ENCODE measurements at regions of chr9 and their contacts with region 1.

Region 1: DNA sequence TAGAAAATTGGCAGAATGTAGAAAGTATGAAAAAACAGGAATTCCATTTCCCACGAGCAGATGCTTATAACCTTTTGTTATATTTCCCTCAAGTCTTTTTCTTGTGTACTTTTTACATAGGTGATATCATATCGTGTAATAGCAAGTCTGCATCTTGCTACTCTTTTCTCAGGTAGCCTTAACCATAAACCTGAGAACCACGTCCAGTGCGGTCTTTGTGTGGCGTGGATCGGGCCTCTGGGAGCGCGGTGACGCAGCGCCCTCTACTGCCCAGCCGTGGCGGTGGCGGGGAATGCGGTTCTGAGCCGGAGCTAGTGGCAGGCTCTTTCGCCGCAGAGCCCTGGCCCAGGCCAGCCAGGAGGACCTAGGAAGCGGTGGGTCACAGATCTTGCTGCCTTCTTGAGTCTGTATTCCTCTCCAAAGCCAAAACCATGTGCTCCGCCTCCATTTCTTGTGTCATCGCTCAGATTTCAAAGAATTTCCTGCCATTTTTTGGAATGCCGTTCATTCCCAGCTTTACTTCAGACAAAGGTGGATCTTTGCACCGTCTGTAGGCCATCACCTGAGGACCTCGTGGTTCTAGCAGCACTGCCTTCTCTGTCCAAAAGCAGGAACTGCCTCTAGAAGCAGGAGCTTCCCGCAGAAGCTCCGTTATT is 71.9 kb downstream of the MVB12B start:
- DNase-seq: peak; percentile 51 to 80
- ATAC-seq: peak; percentile 88 to 96; a peak in 5 of 6 replicates
- H3K4me3 ChIP-seq: no peak overlapping the region
- H3K27ac ChIP-seq: no peak overlapping the region
- H3K4me1 ChIP-seq: peaks cover 10% of the 10 kb centered on the region
- CTCF ChIP-seq: peak; percentile 93
- EP300 ChIP-seq: no peak
- POLR2A ChIP-seq: no peak
- RAD21 ChIP-seq: peak; percentile 93 to 96

Region 2: GRCh38 chr9:126070058-126070655 is 328.4 kb before region 1 on chr9:
- CTCF ChIA-PET with region 1: no interaction called
- POLR2A ChIA-PET with region 1: no interaction called
- DNase-seq: no peak
- ATAC-seq: no peak
- H3K4me3 ChIP-seq: no peak overlapping the region
- H3K27ac ChIP-seq: no peak overlapping the region
- H3K4me1 ChIP-seq: no peaks in the 10 kb centered on the region
- CTCF ChIP-seq: no peak
- EP300 ChIP-seq: no peak
- POLR2A ChIP-seq: no peak
- RAD21 ChIP-seq: no peak

Region 3: DNA sequence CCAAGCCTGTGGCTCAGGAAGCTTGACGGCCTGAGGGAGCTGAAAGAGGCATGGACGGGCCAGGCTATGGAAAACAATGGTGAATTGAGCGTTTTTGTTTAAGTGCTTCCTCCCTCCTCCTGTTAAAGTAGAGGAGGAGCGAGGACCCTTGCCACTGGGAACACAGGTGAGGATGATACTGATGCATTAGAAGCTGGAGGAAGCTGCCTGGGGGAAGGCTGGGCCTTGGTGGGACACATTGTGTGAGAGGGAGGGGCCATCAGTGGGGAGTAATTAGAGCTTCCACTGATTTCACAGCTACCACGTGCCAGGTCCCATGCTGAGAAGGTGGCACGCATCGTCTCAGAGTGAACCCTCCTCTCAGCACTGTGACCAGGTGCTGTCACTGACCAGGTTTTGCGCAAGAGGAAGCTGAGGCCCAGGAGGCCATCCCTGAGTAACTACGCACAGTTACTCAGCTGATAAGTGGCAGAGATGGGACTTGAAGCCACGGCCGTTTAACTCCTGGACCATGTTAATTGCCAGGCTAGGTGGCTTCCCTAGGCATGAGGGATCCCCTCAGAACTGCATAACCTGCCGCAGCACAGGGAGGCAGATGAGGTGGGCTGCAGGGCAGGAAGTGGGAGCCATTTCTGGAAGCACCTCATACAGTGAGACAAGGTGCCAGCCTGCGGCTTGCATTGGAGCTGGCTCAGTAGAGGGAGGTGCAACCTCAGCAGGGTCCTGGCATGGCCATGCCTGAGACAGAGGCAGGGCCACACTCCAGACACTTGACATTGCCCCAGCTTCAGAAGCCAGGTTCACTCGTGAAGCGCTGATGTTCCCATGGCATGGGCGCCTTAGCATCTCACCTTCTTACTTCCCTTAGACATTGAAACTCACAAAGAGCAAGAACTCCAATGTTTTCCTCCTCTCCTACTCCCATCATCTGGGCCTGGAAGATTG is 267.2 kb before region 1 on chr9:
- CTCF ChIA-PET with region 1: no interaction called
- POLR2A ChIA-PET with region 1: no interaction called
- DNase-seq: no peak
- ATAC-seq: no peak
- H3K4me3 ChIP-seq: no peak overlapping the region
- H3K27ac ChIP-seq: no peak overlapping the region
- H3K4me1 ChIP-seq: no peaks in the 10 kb centered on the region
- CTCF ChIP-seq: no peak
- EP300 ChIP-seq: no peak
- POLR2A ChIP-seq: no peak
- RAD21 ChIP-seq: no peak

Region 4: GRCh38 chr9:126301985-126302603 is 96.4 kb before region 1 on chr9:
- CTCF ChIA-PET with region 1: interaction called, 198 read pairs
- POLR2A ChIA-PET with region 1: no interaction called
- DNase-seq: peak; percentile 64 to 75
- ATAC-seq: peak; percentile 91 to 95
- H3K4me3 ChIP-seq: no peak overlapping the region
- H3K27ac ChIP-seq: no peak overlapping the region
- H3K4me1 ChIP-seq: no peaks in the 10 kb centered on the region
- CTCF ChIP-seq: peak; percentile 69
- EP300 ChIP-seq: no peak
- POLR2A ChIP-seq: no peak
- RAD21 ChIP-seq: peak; percentile 64 to 74

Region 5: DNA sequence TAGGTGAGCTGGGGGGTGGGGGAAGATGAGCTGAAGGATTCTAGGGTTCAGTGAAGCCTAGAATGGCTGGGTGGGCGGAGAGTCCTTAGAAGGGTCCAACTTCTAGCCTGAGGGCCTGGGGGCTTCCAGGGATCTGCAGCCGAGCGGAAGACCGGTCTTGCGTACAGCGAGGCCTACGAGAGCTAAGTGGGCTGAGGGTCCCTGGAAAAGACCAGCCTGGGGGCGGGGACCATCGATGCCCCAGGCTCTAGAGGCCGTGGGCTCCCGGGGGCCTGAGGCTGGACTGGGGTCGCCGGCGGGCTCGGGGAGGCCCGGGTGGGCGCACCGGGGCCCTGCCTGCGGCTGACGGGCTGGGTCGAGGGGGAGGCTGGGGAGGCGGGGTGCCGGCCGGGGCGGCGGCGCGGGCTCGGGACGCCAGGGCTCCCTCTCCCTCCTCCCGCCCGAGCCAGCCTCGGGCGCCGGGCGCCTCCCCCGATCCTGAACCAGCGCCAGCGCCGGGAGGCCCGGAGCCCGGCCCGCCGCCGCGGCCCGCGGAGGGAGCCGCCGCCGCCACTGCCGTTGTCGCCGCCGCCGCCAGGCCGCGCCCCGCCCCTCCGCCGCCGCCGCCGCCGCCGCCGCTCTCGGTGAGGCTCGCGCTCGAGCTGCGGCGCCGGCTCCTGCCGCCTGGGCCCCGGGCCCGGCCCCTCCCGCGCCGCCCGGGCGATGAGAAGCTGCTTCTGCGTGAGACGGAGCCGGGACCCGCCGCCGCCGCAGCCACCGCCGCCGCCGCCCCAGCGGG is 72.1 kb before region 1 on chr9 and contains the start of gene MVB12B:
- CTCF ChIA-PET with region 1: interaction called, 24 read pairs
- POLR2A ChIA-PET with region 1: no interaction called
- DNase-seq: peak; percentile 20 to 58
- ATAC-seq: peak; percentile 68 to 91
- H3K4me3 ChIP-seq: peak within 1 kb of the TSS; percentile 65
- H3K27ac ChIP-seq: peak within 1 kb of the TSS; percentile 90 to 96
- H3K4me1 ChIP-seq: peaks cover 6% of the 10 kb centered on the region; the same call in 1 of the 3 replicates
- CTCF ChIP-seq: no peak
- EP300 ChIP-seq: no peak
- POLR2A ChIP-seq: no peak; the same call in 1 of the 2 replicates
- RAD21 ChIP-seq: no peak
- polyA plus RNA-seq, gene MVB12B: 5.2 and 5.9 TPM in 2 replicates

Region 6: GRCh38 chr9:126376311-126377175 is 22.0 kb before region 1 on chr9:
- CTCF ChIA-PET with region 1: interaction called, 20 read pairs
- POLR2A ChIA-PET with region 1: no interaction called
- DNase-seq: no peak
- ATAC-seq: no peak
- H3K4me3 ChIP-seq: no peak overlapping the region
- H3K27ac ChIP-seq: peak overlapping the region in 1 of 2 experiments; percentile 23; a peak in 1 of 6 replicates
- H3K4me1 ChIP-seq: peaks cover 29% of the 10 kb centered on the region; the same call in 2 of the 3 replicates
- CTCF ChIP-seq: no peak
- EP300 ChIP-seq: no peak
- POLR2A ChIP-seq: no peak
- RAD21 ChIP-seq: no peak

Region 7: GRCh38 chr9:126440940-126441339 is 42.4 kb after region 1 on chr9:
- CTCF ChIA-PET with region 1: interaction called, 14 read pairs
- POLR2A ChIA-PET with region 1: no interaction called
- DNase-seq: no peak
- ATAC-seq: no peak
- H3K4me3 ChIP-seq: no peak overlapping the region
- H3K27ac ChIP-seq: no peak overlapping the region
- H3K4me1 ChIP-seq: no peaks in the 10 kb centered on the region
- CTCF ChIP-seq: no peak
- EP300 ChIP-seq: no peak
- POLR2A ChIP-seq: no peak
- RAD21 ChIP-seq: no peak

Region 8: DNA sequence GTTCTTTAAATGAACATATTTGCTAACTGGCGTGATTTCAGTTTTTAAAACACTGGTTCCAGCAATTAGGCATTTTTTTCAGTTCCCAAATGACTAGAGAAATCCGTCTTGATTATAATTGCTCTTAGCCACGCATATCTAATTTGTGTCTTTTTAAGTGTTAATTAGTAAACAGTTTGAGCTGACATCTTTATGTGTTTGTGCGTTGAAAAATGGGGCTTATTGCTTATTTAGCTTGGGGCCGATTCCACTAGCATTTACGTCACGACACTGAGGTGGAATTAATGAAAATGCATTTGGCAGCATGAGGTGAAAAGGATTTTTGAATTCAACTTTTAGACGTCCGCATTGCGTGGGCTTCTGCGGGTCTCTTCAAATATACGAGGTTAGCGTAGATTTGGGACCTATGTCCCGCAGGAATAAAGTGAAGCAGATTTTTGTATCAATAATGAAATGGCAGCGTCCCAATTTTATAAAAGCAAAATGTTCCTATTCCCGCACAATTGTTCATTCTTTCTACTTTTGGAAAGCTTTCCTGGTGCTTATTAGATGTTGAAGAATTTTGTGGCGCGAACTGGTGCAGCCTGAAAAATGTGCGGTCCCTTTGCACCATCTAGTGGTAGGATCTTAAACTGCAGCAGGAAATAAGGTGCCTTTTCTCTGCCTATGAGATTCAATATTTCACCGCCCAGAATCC is 92.5 kb after region 1 on chr9:
- CTCF ChIA-PET with region 1: interaction called, 62 read pairs
- POLR2A ChIA-PET with region 1: no interaction called
- DNase-seq: peak in 1 of 2 experiments; percentile 61
- ATAC-seq: peak; percentile 49 to 83; a peak in 5 of 6 replicates
- H3K4me3 ChIP-seq: no peak overlapping the region
- H3K27ac ChIP-seq: no peak overlapping the region
- H3K4me1 ChIP-seq: no peaks in the 10 kb centered on the region
- CTCF ChIP-seq: peak; percentile 90
- EP300 ChIP-seq: no peak
- POLR2A ChIP-seq: no peak
- RAD21 ChIP-seq: peak; percentile 92 to 94